Uterus (tissue), 4 donors: ENCODE measurements at regions of chr17 and their contacts with region 1.

Region 1: DNA sequence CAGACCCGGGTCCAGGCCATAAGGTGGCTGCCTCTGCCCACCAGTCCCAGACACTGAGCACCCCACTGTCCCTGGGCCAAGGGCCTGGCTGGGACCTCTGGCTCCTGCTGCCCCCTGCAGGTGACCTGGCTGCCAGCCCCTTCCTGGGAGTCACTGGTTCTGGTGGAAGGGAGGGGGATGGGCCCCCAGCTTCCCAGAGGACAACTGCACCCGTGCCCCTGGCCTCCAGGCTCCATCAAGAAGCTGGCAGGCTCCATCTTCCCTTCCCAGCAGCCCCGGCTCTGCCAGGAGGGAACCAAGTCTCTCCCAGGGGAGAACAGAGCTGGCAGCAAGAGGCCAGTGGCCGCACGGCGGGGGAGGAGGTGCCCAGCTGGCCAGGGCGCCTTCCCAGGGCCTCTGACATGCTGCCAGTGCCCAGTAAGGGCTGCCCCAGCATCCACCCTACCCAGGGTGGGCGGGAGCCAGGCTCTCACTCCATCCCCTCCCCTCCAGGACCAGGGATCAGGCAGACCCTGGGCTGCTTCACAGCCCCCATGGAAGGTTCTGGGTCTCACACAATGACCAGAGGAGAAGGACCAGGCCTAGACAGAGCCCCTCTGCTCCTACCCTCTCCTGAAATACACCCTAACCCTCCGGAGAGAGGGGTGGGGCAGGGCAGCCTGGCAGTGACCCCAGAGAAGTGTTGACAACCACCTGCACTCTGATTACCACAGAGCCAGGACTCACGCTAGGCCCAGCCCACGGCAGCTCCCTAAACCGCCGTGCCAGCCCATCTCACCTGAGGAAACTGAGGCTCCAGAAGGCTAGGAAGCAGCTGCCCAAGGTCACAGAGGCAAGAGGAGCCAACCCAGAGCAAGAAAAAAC is 3.6 kb downstream of the CLUH start:
- DNase-seq: peak in 1 of 2 donors; percentile 44
- H3K4me3 ChIP-seq: no peak overlapping the region
- H3K27ac ChIP-seq: no peak overlapping the region
- H3K4me1 ChIP-seq: peaks cover 0 to 25% of the 10 kb centered on the region in 2 donors
- H3K27me3 ChIP-seq: no peaks in the 10 kb centered on the region
- CTCF ChIP-seq: peak in 1 of 4 experiments; percentile 11
- POLR2A ChIP-seq: no peak

Region 2: GRCh38 chr17:2592971-2593820 is 114.8 kb before region 1 on chr17 and contains the start of gene PAFAH1B1:
- intact Hi-C with region 1: loop called (anchors 10 kb)
- DNase-seq: peak; percentile 86 to 93
- H3K4me3 ChIP-seq: peak within 1 kb of the TSS; percentile 73 to 83
- H3K27ac ChIP-seq: peak within 1 kb of the TSS; percentile 98
- H3K4me1 ChIP-seq: peaks cover 5% of the 10 kb centered on the region in 2 donors
- H3K27me3 ChIP-seq: no peaks in the 10 kb centered on the region
- CTCF ChIP-seq: peak; percentile 11 to 44 (median 29)
- POLR2A ChIP-seq: peak; percentile 78 to 96
- total RNA-seq, gene PAFAH1B1: 84.4 to 189 (median 159) TPM

Region 3: GRCh38 chr17:2608350-2608919 is 99.5 kb before region 1 on chr17:
- intact Hi-C with region 1: no loop called
- DNase-seq: no peak
- H3K4me3 ChIP-seq: no peak overlapping the region
- H3K27ac ChIP-seq: no peak overlapping the region
- H3K4me1 ChIP-seq: peaks cover 11 to 14% of the 10 kb centered on the region in 2 donors
- H3K27me3 ChIP-seq: no peaks in the 10 kb centered on the region
- CTCF ChIP-seq: no peak
- POLR2A ChIP-seq: no peak